ENCODE measurements at regions of chr2 and their contacts with region 1.

Region 1: GRCh38 chr2:101516823-101517690 is 42.1 kb upstream of the RFX8 start:
- DNase-seq: no peak
- ATAC-seq: peak; percentile 21
- H3K4me3 Mint-ChIP-seq: no peak overlapping the region
- H3K27ac Mint-ChIP-seq: no peak overlapping the region
- H3K4me1 Mint-ChIP-seq: peaks cover 29% of the 10 kb centered on the region
- H3K27me3 Mint-ChIP-seq: no peaks in the 10 kb centered on the region
- CTCF ChIP-seq: no peak

Region 2: GRCh38 chr2:101479328-101479727 is 37.7 kb before region 1 on chr2:
- CTCF ChIA-PET with region 1: no interaction called
- POLR2A ChIA-PET with region 1: no interaction called
- intact Hi-C with region 1: no loop called
- DNase-seq: no peak
- ATAC-seq: no peak
- H3K4me3 Mint-ChIP-seq: no peak overlapping the region
- H3K27ac Mint-ChIP-seq: no peak overlapping the region
- H3K4me1 Mint-ChIP-seq: peaks cover 7% of the 10 kb centered on the region
- H3K27me3 Mint-ChIP-seq: peaks cover 23% of the 10 kb centered on the region
- CTCF ChIP-seq: no peak

Region 3: DNA sequence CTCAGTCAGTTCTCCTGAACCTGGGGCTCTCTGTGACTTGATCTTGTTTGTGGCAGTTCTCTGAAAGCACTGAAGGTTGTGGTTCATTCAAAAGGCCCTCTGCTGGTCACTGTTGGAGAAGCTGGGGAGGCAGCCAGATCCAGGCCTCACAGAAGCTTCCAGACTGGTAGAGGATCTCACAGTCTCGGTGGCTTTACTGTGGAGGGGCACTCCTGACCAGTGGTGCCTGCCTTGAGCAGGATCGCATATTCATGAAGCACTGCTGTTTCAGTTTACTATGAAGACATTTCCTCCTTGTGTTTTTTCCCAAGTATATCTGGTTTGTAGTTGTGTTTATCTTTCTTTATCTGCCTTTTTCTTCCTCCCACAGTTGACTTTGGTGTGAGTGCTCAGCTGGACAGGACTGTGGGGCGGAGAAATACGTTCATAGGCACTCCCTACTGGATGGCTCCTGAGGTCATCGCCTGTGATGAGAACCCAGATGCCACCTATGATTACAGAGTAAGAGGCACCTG is 314.4 kb after region 1 on chr2:
- CTCF ChIA-PET with region 1: no interaction called
- POLR2A ChIA-PET with region 1: no interaction called
- intact Hi-C with region 1: loop called (anchors 2 kb)
- DNase-seq: peak; percentile 37
- ATAC-seq: peak; percentile 82
- H3K4me3 Mint-ChIP-seq: no peak overlapping the region
- H3K27ac Mint-ChIP-seq: peak overlapping the region; percentile 56
- H3K4me1 Mint-ChIP-seq: peaks cover 49% of the 10 kb centered on the region
- H3K27me3 Mint-ChIP-seq: no peaks in the 10 kb centered on the region
- CTCF ChIP-seq: no peak